A673 (cell line): ENCODE measurements at regions of chr16 and their contacts with region 1.

Region 1: DNA sequence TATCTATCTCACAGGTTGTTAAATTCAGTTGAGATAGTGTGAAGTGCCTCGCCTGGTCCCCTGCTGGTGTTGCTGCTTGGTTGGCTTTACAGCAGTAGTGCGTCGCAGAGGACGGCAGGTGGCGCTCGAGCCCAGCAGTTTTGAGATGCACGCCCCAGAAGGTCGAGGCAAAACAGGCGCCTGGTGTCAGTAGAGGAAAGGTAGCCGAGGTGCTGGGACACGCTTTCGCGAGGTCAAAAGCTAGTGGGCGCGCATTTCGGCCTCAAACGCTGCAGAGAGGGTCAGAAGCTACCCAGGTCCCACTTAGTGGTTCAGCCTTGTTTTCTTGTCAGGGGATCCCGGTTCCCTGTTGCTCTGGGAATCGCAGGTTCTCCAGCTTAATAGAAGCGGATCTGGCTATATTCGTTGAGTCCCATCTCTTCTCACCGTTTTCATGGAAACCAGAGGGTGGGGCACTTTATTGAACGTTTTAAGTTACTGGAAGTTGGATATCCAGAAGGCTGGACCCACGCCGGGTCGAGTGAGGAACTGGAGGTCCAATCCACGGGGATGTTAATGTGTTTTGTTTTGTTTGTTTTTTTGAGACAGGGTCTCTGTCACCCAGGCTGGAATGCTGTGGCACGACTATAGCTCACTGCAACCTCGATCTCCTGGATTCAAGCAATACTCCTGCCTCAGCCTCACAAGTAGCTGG is 10.3 kb upstream of the ZFP90 start:
- DNase-seq: peak; percentile 88
- H3K4me3 ChIP-seq: peak overlapping the region; percentile 62
- H3K27ac ChIP-seq: no peak overlapping the region
- H3K4me1 ChIP-seq: peaks cover 8% of the 10 kb centered on the region
- H3K27me3 ChIP-seq: no peaks in the 10 kb centered on the region
- CTCF ChIP-seq: peak; percentile 91

Region 2: DNA sequence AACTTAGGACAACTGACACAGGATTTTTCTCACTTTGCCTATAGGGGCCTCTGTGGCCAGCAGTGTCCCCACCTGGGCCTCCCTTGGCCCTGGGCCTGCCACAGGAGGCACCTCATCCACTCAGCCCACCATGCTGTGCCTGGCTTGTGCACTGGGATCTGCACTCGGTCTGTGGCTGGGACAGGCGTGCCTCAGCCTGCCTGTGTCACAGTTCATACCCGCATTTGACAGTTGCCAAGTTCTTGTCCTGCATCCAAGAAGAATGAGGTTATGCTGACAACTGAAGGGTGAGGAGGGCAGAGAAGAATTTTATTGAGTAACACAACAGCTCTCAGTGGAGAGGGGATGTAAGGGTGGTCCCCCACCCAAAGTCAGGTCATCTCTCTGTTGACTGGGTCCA is 46.2 kb after region 1 on chr16:
- CTCF ChIA-PET with region 1: no interaction called
- POLR2A ChIA-PET with region 1: no interaction called
- intact Hi-C with region 1: no loop called
- DNase-seq: no peak
- H3K4me3 ChIP-seq: no peak overlapping the region
- H3K27ac ChIP-seq: no peak overlapping the region
- H3K4me1 ChIP-seq: no peaks in the 10 kb centered on the region
- H3K27me3 ChIP-seq: no peaks in the 10 kb centered on the region
- CTCF ChIP-seq: no peak

Region 3: DNA sequence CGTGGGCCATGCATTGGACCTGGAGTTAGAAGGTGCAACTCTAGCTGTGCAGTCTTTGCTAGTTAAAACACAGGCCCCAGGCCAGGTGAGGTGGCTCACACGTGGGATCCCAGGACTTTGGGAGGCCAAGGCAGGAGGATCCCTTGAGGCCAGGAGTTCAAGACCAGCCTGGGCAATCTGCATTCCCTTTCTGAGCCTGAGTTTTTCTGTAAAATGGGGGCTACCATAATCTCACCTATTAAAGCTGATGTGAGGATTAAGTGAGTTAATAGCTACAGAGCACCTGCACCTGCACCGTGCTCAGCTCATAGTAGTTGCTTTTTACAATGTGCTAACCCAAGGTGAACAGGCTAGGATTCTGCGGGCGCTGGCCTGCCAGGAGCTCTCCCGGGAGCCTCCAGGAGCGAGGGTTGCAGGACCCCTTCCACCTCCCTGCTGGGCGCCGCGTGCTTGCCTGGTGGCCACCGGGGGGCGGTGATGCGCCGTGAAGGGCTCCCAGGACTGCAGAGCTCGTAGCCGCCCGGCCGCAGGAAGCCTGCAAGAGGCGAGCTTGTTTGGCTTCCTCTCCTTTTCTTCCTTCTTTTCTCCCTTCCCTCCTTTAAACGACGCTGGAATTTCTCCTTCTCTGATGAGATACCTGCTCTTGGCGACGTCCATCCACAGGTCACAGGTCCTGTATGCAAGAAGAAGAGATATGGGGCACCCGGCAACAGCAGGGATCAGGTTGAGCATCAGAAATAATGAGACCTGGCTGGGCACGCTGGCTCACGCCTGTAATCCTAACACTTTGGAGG is 61.6 kb after region 1 on chr16:
- CTCF ChIA-PET with region 1: no interaction called
- POLR2A ChIA-PET with region 1: no interaction called
- intact Hi-C with region 1: no loop called
- DNase-seq: peak; percentile 65
- H3K4me3 ChIP-seq: no peak overlapping the region
- H3K27ac ChIP-seq: no peak overlapping the region
- H3K4me1 ChIP-seq: no peaks in the 10 kb centered on the region
- H3K27me3 ChIP-seq: no peaks in the 10 kb centered on the region
- CTCF ChIP-seq: peak; percentile 83

Region 4: GRCh38 chr16:68704232-68704867 is 175.5 kb after region 1 on chr16:
- CTCF ChIA-PET with region 1: no interaction called
- POLR2A ChIA-PET with region 1: no interaction called
- intact Hi-C with region 1: loop called (anchors 5 kb)
- DNase-seq: peak; percentile 79
- H3K4me3 ChIP-seq: no peak overlapping the region
- H3K27ac ChIP-seq: no peak overlapping the region
- H3K4me1 ChIP-seq: no peaks in the 10 kb centered on the region
- H3K27me3 ChIP-seq: no peaks in the 10 kb centered on the region
- CTCF ChIP-seq: peak; percentile 82

Region 5: DNA sequence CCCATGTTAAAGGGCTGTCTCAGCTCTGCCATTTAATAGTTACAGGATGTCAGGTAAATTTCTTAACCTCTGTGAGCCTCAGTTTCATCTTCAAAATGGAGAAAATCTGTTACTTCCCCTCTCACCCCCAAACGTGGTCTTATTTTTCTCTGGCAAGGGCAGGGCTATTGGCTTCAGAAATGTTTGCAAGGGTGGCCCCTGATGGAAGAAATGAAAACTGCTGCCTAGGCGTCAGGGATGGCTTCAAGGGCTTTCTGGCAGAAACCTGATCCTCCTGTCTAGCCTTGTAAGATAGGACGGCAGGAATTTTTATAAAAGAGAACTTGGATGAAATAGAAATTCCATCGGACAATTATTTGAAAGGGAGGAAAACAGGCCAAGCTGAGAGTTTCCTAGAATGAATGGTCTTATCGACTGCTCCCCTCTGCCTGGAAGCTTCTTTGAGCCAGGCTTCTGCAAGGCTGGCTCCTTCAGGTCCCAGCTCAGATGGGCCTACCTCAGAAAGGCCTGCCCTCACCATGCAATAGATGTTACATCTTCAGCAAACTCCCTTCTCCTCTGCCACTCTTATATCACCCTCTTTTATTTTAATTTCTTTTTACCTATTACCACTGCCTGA is 271.5 kb after region 1 on chr16:
- CTCF ChIA-PET with region 1: interaction called, 3 read pairs
- POLR2A ChIA-PET with region 1: no interaction called
- intact Hi-C with region 1: loop called (anchors 2 kb)
- DNase-seq: peak; percentile 80
- H3K4me3 ChIP-seq: no peak overlapping the region
- H3K27ac ChIP-seq: no peak overlapping the region
- H3K4me1 ChIP-seq: no peaks in the 10 kb centered on the region
- H3K27me3 ChIP-seq: no peaks in the 10 kb centered on the region
- CTCF ChIP-seq: peak; percentile 80

Region 6: GRCh38 chr16:68843482-68844210 is 314.8 kb after region 1 on chr16 and contains the start of gene TANGO6:
- CTCF ChIA-PET with region 1: interaction called, 3 read pairs
- POLR2A ChIA-PET with region 1: no interaction called
- intact Hi-C with region 1: loop called (anchors 2 kb)
- DNase-seq: peak; percentile 91
- H3K4me3 ChIP-seq: peak within 1 kb of the TSS; percentile 72
- H3K27ac ChIP-seq: peak within 1 kb of the TSS; percentile 93
- H3K4me1 ChIP-seq: peaks cover 7% of the 10 kb centered on the region
- H3K27me3 ChIP-seq: no peaks in the 10 kb centered on the region
- CTCF ChIP-seq: peak; percentile 64
- total RNA-seq, gene TANGO6: 15.8 and 18.0 TPM in 2 replicates